Psoas muscle (tissue), 8 donors: ENCODE measurements at regions of chr19 and their contacts with region 1.

Region 1: GRCh38 chr19:34677386-34678084 is at the start of gene ZNF302:
- DNase-seq: peak; percentile 97 to 98
- ATAC-seq: peak; percentile 97 to 99 (median 98)
- H3K4me3 ChIP-seq: peak within 1 kb of the TSS; percentile 83
- H3K27ac ChIP-seq: peak within 1 kb of the TSS; percentile 98
- H3K4me1 ChIP-seq: peaks cover 44% of the 10 kb centered on the region
- H3K27me3 ChIP-seq: no peaks in the 10 kb centered on the region
- CTCF ChIP-seq: no peak
- total RNA-seq, gene ZNF302: 24.3 to 32.2 (median 27.2) TPM

Region 2: DNA sequence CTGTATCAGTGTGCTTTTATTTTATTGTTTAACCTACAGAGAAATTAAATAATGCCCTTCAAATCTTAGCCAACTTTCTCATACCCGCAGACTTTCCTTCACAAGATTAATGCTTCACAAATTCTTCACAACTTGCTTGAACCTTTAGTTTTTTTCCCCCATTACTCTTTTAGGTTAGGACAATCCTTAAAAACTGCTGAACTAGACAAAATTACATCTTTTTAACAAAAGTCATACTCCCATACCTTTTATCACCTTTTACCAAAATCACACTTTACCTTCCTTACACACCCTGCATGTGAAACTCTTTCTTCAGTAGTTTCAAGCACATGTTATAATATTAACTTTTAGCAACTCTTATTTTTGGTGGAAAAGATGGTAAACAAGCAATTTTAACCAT is 59.1 kb before region 1 on chr19:
- intact Hi-C with region 1: no loop called
- DNase-seq: no peak
- ATAC-seq: no peak
- H3K4me3 ChIP-seq: no peak overlapping the region
- H3K27ac ChIP-seq: no peak overlapping the region
- H3K4me1 ChIP-seq: no peaks in the 10 kb centered on the region
- H3K27me3 ChIP-seq: no peaks in the 10 kb centered on the region
- CTCF ChIP-seq: no peak

Region 3: DNA sequence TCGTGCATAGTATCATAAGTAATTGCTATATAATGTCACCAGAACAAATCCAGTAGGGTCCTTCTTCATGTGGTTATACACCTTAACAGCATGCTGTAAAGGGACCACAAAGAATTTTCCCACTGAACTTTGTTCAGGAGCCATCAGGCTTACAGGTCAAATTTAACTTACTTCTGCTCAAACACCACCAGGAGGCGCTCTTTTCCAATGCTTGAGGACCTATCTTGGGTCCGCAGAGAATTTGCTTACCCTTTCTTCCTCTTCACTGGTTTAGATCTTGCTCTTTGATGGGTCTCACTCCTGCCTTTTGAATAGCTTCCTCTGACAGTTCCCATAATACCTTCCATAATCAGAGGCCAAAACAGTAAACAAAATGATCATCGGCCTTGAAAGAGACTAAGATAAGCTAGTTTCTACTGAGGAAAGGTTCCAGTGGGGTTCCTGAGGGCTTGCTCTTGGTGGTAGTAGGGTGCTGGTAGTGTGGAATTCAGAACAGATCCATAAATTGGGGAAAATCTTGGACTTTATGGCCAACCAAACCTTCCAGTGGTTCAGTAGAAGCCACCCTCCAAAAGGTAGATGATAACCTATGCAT is 37.9 kb before region 1 on chr19:
- intact Hi-C with region 1: loop called in 1 of 2 experiments (anchors 5 kb)
- DNase-seq: no peak
- ATAC-seq: peak; percentile 48 to 83 (median 68)
- H3K4me3 ChIP-seq: no peak overlapping the region
- H3K27ac ChIP-seq: no peak overlapping the region
- H3K4me1 ChIP-seq: peaks cover 6% of the 10 kb centered on the region
- H3K27me3 ChIP-seq: no peaks in the 10 kb centered on the region
- CTCF ChIP-seq: peak; percentile 87

Region 4: GRCh38 chr19:34733826-34734600 is 56.5 kb after region 1 on chr19 and contains the start of gene ZNF181:
- intact Hi-C with region 1: loop called in 1 of 2 experiments (anchors 10 kb)
- DNase-seq: peak; percentile 91 to 94
- ATAC-seq: peak; percentile 91 to 95 (median 94)
- H3K4me3 ChIP-seq: peak within 1 kb of the TSS; percentile 71
- H3K27ac ChIP-seq: peak within 1 kb of the TSS; percentile 96
- H3K4me1 ChIP-seq: peaks cover 19% of the 10 kb centered on the region
- H3K27me3 ChIP-seq: no peaks in the 10 kb centered on the region
- CTCF ChIP-seq: no peak
- total RNA-seq, gene ZNF181: 15.4 to 21.2 (median 17.9) TPM